GM12878 (cell line): ENCODE measurements at regions of chr20 and their contacts with region 1.

Region 1: DNA sequence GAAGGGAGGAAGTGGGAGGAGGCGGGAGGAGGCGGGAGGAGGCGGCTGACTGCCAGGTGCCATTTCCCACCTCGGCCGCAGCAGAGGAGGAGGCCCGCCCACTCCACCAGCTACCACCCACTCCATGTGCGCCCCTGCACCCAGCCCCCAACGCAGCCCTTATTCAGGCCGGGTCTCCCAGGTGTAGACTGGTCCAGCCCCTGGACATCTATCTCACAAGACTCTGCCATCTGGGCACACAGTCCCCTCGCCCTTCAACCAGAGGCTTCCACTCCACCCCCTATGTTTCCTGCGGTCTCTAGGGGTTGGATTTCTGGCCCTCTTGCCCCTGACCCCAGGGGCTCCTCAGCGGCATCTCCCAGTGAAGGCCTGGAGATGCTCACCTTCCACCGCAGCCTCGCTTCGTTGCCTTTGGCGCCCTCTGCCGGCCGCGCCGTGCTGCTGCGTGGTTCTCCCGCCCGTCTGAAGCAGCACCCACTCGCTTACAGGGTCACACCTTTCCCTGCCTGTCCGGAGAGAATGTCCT is 32.6 kb upstream of the FAM83D start:
- DNase-seq: peak; percentile 38
- ATAC-seq: peak; percentile 81
- H3K4me3 ChIP-seq: no peak overlapping the region
- H3K27ac ChIP-seq: peak overlapping the region; percentile 91
- H3K4me1 ChIP-seq: peaks cover 50% of the 10 kb centered on the region
- H3K27me3 ChIP-seq: no peaks in the 10 kb centered on the region
- CTCF ChIP-seq: peak; percentile 90 to 98 (median 95)
- EP300 ChIP-seq: no peak
- POLR2A ChIP-seq: no peak; the same call in 1 of the 2 replicates
- RAD21 ChIP-seq: peak; percentile 95

Region 2: DNA sequence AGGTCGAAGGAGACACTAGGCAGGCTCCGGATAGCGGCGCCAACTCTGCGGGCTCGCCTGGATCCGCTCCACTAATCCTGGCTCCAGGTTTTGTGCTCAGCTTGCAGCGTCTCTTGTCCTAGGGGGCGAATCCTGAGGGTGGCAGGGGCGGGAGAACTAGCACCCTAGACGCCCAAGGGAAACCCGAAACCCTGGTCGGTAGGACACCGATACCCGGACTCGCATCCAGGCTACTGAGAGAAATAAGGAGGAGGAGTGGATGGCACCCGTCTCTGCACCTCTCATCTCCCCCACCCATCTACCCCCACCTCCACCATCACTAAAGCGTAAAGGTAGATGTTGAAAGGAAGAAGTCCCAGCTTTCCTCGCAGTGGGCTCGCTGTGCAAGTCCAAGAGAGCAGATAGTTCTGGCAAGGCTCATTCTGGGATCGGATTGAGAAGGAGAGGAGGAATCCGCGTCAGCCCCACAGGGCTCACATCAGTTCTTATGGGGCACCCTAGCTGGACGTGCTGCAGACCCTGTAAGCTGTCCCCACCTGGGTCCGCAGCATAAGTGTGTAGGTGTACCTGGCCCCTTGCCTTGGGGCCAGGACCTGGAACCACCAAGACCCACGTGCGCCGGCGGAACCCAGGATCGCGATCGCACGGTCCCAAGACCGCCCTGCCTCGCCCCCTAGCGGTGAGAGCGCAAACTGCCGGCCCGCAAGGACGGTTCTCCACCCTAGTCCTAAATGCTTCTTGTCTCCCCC is 162.5 kb before region 1 on chr20:
- CTCF ChIA-PET with region 1: interaction called, 19 read pairs
- POLR2A ChIA-PET with region 1: interaction called, 3 read pairs
- RAD21 ChIA-PET with region 1: interaction called, 4 read pairs
- SMC1A ChIA-PET with region 1: interaction called, 10 read pairs
- in situ Hi-C with region 1: no loop called
- intact Hi-C with region 1: no loop called
- DNase-seq: no peak
- ATAC-seq: peak; percentile 94
- H3K4me3 ChIP-seq: peak overlapping the region; percentile 35; the same call in 1 of the 2 replicates
- H3K27ac ChIP-seq: no peak overlapping the region
- H3K4me1 ChIP-seq: peaks cover 8% of the 10 kb centered on the region
- H3K27me3 ChIP-seq: peaks cover 28 to 53% of the 10 kb centered on the region in 2 experiments
- CTCF ChIP-seq: peak; percentile 87 to 99 (median 98)
- EP300 ChIP-seq: no peak
- POLR2A ChIP-seq: no peak
- RAD21 ChIP-seq: peak; percentile 53

Region 3: DNA sequence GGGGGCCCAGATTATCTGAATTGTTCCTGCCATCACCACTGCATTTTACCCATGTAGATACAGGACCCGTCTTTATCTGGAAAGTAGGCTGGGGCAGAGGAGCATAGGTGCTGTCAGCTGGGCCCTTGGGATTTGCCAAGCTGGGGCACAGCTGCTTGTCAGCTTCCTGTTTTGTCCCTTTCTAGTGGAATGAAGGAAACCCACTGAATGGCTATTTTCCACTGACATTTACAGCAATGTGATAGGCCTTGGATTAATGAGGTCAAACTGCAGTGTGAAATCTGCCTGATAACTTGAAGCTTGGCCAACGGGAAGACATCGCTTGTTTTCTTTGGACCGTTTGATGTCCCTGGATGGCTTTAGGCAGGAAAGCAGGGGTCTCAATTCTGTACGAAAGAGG is 81.4 kb before region 1 on chr20:
- CTCF ChIA-PET with region 1: interaction called, 91 read pairs
- POLR2A ChIA-PET with region 1: interaction called, 43 read pairs
- RAD21 ChIA-PET with region 1: interaction called, 167 read pairs
- SMC1A ChIA-PET with region 1: interaction called, 103 read pairs
- in situ Hi-C with region 1: no loop called
- intact Hi-C with region 1: loop called (anchors 1 kb)
- DNase-seq: no peak
- ATAC-seq: no peak
- H3K4me3 ChIP-seq: peak overlapping the region; percentile 60; the same call in 1 of the 2 replicates
- H3K27ac ChIP-seq: peak overlapping the region; percentile 84; the same call in 1 of the 2 replicates
- H3K4me1 ChIP-seq: peaks cover 61% of the 10 kb centered on the region
- H3K27me3 ChIP-seq: no peaks in the 10 kb centered on the region
- CTCF ChIP-seq: no peak
- EP300 ChIP-seq: no peak
- POLR2A ChIP-seq: 0 out of 2 replicates have a peak, but pooled peaks have one; percentile 2
- RAD21 ChIP-seq: no peak

Region 4: DNA sequence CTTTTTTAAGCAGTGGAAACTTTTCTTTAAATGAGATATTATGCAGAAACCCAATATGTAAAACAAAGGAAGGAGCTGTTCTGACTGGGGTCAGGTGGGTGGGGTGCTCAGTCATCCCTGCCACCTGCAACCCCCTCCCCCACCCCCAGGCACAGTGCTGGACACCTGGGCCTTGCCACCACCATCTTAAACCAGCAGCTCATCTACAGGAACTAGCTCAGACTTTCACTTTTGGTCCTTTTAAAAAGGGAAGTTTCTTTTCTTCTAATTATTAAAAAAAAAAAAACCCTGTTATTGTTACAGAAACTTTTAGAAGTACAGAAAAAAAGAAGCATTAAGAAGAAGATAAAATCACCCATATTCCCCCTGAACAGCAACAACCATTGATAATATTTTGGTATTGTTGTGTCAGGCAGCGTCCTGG is 51.1 kb before region 1 on chr20:
- CTCF ChIA-PET with region 1: interaction called, 54 read pairs
- POLR2A ChIA-PET with region 1: interaction called, 16 read pairs
- RAD21 ChIA-PET with region 1: interaction called, 80 read pairs
- SMC1A ChIA-PET with region 1: interaction called, 49 read pairs
- in situ Hi-C with region 1: no loop called
- intact Hi-C with region 1: loop called (anchors 1 kb)
- DNase-seq: peak; percentile 91
- ATAC-seq: peak; percentile 99
- H3K4me3 ChIP-seq: peak overlapping the region; percentile 8; the same call in 1 of the 2 replicates
- H3K27ac ChIP-seq: peak overlapping the region; percentile 96
- H3K4me1 ChIP-seq: peaks cover 59% of the 10 kb centered on the region
- H3K27me3 ChIP-seq: no peaks in the 10 kb centered on the region
- CTCF ChIP-seq: no peak
- EP300 ChIP-seq: peak; percentile 67 to 95
- POLR2A ChIP-seq: no peak
- RAD21 ChIP-seq: peak; percentile 29; the same call in 1 of the 2 replicates

Region 5: GRCh38 chr20:38875175-38875993 is 18.2 kb before region 1 on chr20:
- CTCF ChIA-PET with region 1: interaction called, 183 read pairs
- POLR2A ChIA-PET with region 1: interaction called, 60 read pairs
- RAD21 ChIA-PET with region 1: interaction called, 205 read pairs
- SMC1A ChIA-PET with region 1: interaction called, 131 read pairs
- in situ Hi-C with region 1: no loop called
- intact Hi-C with region 1: loop called (anchors 1 kb)
- DNase-seq: peak; percentile 97
- ATAC-seq: peak; percentile 68
- H3K4me3 ChIP-seq: peak overlapping the region; percentile 44
- H3K27ac ChIP-seq: peak overlapping the region; percentile 96
- H3K4me1 ChIP-seq: peaks cover 80% of the 10 kb centered on the region
- H3K27me3 ChIP-seq: no peaks in the 10 kb centered on the region
- CTCF ChIP-seq: no peak
- EP300 ChIP-seq: peak; percentile 96 to 99
- POLR2A ChIP-seq: peak; percentile 76
- RAD21 ChIP-seq: peak; percentile 14; the same call in 1 of the 2 replicates

Region 6: DNA sequence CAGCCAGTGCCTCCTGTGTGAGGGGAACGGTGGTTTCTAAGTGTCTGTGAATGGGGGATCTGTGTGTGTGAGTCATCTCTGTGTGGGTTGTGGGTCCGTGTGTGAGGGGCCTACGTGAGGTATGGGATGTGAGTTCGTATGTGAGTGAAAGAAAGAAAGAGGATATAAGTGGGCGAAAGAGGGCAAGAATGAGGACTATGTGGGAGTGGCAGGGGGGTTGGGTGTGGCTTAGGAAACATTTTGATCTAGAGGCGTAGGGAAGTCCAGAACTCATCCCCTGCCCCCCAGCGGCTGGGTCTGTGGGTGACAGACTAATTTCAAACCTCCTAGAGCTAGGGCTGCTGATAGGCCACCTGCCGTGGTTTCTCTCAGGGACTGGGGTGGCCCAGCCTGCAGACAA is 104.0 kb after region 1 on chr20:
- CTCF ChIA-PET with region 1: interaction called, 5 read pairs
- POLR2A ChIA-PET with region 1: interaction called, 3 read pairs
- RAD21 ChIA-PET with region 1: interaction called, 12 read pairs
- SMC1A ChIA-PET with region 1: interaction called, 8 read pairs
- in situ Hi-C with region 1: no loop called
- intact Hi-C with region 1: no loop called
- DNase-seq: peak; percentile 87
- ATAC-seq: peak; percentile 99
- H3K4me3 ChIP-seq: no peak overlapping the region
- H3K27ac ChIP-seq: peak overlapping the region; percentile 49
- H3K4me1 ChIP-seq: peaks cover 14% of the 10 kb centered on the region
- H3K27me3 ChIP-seq: no peaks in the 10 kb centered on the region
- CTCF ChIP-seq: peak; percentile 49 to 63 (median 52)
- EP300 ChIP-seq: peak; percentile 45 to 59; a peak in 3 of 4 replicates
- POLR2A ChIP-seq: peak; percentile 26; the same call in 1 of the 2 replicates
- RAD21 ChIP-seq: peak; percentile 64